Heart left ventricle (tissue), 16 donors: ENCODE measurements at regions of chr5 and their contacts with region 1.

Region 1: DNA sequence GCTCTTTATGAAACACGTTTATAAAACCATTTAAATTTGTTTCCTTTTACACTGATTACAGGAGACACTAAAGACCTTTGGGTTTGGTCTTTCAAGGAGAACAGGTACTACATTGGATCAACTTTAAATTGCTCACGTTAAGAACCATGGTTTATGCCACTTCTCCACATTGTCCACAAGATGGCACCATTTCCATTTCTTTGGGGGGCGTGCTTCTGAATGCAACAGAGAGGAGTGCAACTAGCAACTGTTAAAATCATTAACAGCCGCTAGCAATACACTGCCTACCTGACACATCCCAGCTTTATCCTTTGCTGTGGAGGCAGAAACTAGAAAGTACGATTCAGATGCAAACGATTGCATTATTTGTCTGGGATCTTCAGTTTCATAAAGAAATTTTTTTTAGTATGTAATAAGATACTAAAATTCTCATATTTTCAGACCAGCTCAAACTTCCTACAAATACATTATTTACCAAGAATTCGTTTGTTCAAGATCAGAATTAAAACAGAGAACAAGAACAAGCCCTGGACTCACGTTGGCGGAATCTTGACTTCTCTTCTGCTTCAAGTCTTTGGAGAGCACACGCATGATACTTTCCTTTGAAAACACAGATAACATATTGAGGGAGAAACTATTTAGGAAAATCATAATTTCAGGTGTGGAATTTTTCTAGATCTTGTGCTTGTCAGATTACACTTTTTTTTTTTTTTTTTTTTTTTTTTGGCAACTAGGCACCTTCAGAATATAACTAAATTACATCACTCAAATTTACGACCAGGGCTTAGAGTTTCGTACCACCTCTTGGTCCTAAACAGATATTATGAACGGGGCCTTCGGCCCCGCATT is 702 bp downstream of the CDC20B start:
- DNase-seq: peak in 3 of 5 donors; percentile 30 to 54 (median 33)
- ATAC-seq: peak; percentile 77 to 86 (median 81)
- H3K4me3 ChIP-seq: peak overlapping the region; percentile 29 to 63 (median 50)
- H3K27ac ChIP-seq: no peak overlapping the region
- H3K4me1 ChIP-seq: peaks cover 5 to 32% (median 24%) of the 10 kb centered on the region in 12 donors
- H3K27me3 ChIP-seq: peaks cover 26 to 65% (median 43%) of the 10 kb centered on the region in 9 donors
- CTCF ChIP-seq: peak; percentile 74 to 89 (median 81)
- POLR2A ChIP-seq: no peak

Region 2: DNA sequence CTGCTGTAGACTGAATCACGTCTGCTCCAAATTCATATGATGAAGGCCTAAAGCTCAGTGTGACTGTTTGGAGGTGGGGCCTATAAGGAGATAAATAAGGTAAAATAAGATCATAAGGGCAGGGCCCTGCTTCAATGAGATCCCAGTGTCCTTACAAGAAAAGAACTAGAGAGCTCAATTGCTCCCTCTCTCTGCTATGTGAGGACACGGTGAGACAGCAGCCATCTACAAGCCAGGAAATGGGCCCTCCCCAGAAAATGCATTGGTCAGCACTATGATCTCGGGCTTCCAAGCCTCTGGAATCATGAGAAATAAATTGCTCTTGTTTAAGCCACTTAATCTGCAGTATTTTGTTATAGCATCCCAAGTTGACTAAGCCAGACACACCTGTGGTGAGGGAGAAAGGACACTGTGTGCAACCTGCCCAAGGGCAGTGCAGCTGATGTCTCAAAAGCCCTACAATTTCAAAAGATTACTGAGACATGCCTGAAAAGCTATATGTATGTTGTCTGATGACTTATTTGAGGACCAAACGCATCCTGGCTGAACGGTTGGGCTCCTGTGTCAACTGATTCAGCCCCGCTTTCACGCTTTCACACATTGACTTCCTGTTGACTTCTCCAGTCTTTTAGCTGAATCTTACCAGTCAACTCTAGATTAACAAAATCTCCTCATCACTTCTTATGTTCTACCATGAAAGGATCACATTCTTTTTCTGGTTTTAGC is 135.1 kb before region 1 on chr5:
- intact Hi-C with region 1: no loop called
- DNase-seq: no peak
- ATAC-seq: no peak
- H3K4me3 ChIP-seq: no peak overlapping the region
- H3K27ac ChIP-seq: peak overlapping the region in 1 of 12 donors; percentile 77
- H3K4me1 ChIP-seq: peaks cover 0 to 8% (median 0%) of the 10 kb centered on the region in 12 donors
- H3K27me3 ChIP-seq: no peaks in the 10 kb centered on the region
- CTCF ChIP-seq: peak in 1 of 12 donors; percentile 17
- POLR2A ChIP-seq: no peak

Region 3: DNA sequence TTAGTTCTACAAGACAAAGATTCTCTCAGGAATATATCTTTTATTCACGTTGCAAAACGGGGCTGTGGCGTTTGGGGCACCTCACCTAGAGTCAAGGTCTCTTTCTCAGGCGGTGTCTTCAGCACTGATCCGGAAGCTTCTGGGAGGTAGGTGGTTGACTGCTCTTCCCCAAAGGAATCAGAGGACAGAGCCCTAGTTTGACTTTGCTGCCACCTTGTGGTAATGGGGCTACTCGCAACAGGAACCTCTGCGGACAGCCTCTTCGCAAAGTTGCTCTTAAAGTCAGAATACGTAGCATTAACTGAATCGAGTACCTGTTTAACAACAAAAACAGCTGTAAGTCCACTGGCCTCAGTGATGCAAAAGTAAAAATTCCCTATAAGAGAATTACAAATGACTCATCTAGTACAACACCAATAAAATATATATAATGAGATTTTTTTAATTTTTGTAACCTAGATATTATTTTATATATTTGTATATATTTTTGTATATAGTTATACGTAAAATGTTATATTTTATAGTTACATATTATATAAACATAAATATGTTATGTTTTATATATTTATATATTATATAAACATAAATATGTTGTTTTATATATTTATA is 25.6 kb before region 1 on chr5:
- intact Hi-C with region 1: no loop called
- DNase-seq: peak; percentile 64 to 77 (median 69)
- ATAC-seq: peak; percentile 37 to 89 (median 74)
- H3K4me3 ChIP-seq: no peak overlapping the region
- H3K27ac ChIP-seq: no peak overlapping the region
- H3K4me1 ChIP-seq: peaks cover 0 to 5% (median 0%) of the 10 kb centered on the region in 12 donors
- H3K27me3 ChIP-seq: peaks cover 0 to 19% (median 3%) of the 10 kb centered on the region in 9 donors
- CTCF ChIP-seq: peak; percentile 84 to 97 (median 92)
- POLR2A ChIP-seq: no peak

Region 4: DNA sequence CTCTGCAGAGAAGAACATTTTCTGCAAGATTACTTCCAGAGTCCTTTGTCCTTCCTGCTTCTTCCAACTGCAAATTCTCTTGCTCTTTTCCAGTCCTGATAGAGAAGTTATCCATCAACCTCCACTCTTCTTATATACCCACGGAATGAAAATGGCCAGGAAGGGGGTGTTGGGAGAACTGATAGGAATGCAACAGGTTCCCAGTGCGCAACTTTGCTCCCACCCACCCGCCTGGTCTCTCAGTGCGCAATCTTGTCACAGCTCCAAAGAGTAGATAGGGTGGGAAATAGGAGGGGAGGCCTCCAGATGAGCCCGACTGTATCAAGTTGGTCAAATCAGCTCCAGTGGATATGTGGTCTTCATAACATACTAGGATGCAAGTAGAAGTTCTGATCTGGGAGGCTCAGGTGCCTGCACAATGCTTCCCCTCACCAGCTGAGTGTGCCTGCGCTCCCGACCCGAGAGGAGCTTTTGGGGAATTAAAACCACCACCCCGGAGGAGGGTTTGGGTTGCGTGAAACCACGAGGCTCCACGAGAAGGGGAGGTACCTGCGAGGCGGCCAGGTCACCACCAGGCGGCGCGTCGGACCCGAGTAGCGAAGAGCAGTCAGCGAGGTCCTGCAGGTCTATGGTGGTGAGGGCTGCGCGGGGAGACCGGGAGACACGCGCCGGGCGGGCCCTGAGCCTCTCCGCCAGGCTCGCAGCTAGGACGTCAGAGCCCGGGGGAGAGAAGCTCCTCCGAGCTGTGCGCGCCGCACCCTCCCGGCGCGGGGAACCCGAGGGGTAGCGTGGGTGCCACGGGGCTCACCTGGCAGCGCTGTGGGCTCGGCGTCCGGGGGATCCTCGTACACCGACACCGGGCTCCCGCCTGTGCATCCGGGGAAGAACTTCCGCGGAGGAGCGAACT is 54.0 kb after region 1 on chr5:
- intact Hi-C with region 1: loop called in 9 of 10 experiments (anchors 5 to 10 kb)
- DNase-seq: peak in 2 of 5 donors; percentile 26 to 73
- ATAC-seq: peak in 2 of 4 donors; percentile 45 to 59
- H3K4me3 ChIP-seq: peak overlapping the region in 11 of 12 donors; percentile 18 to 52 (median 38)
- H3K27ac ChIP-seq: no peak overlapping the region
- H3K4me1 ChIP-seq: peaks cover 0 to 33% (median 17%) of the 10 kb centered on the region in 12 donors
- H3K27me3 ChIP-seq: peaks cover 71 to 100% (median 100%) of the 10 kb centered on the region in 9 donors
- CTCF ChIP-seq: peak in 8 of 12 donors; percentile 6 to 36 (median 21)
- POLR2A ChIP-seq: no peak

Region 5: GRCh38 chr5:55232985-55233928 is 61.0 kb after region 1 on chr5 and contains the start of gene CCNO:
- intact Hi-C with region 1: loop called in 9 of 10 experiments (anchors 5 to 10 kb)
- DNase-seq: peak; percentile 44 to 78 (median 54)
- ATAC-seq: peak; percentile 62 to 92 (median 86)
- H3K4me3 ChIP-seq: peak within 1 kb of the TSS; percentile 39 to 67 (median 56)
- H3K27ac ChIP-seq: no peak within 1 kb of the TSS
- H3K4me1 ChIP-seq: peaks cover 6 to 42% (median 32%) of the 10 kb centered on the region in 12 donors
- H3K27me3 ChIP-seq: peaks cover 43 to 100% (median 79%) of the 10 kb centered on the region in 9 donors
- CTCF ChIP-seq: no peak
- POLR2A ChIP-seq: no peak
- total RNA-seq, gene CCNO: 0.23 to 0.36 TPM in 2 of 9 donors, not detected in the others

Region 6: DNA sequence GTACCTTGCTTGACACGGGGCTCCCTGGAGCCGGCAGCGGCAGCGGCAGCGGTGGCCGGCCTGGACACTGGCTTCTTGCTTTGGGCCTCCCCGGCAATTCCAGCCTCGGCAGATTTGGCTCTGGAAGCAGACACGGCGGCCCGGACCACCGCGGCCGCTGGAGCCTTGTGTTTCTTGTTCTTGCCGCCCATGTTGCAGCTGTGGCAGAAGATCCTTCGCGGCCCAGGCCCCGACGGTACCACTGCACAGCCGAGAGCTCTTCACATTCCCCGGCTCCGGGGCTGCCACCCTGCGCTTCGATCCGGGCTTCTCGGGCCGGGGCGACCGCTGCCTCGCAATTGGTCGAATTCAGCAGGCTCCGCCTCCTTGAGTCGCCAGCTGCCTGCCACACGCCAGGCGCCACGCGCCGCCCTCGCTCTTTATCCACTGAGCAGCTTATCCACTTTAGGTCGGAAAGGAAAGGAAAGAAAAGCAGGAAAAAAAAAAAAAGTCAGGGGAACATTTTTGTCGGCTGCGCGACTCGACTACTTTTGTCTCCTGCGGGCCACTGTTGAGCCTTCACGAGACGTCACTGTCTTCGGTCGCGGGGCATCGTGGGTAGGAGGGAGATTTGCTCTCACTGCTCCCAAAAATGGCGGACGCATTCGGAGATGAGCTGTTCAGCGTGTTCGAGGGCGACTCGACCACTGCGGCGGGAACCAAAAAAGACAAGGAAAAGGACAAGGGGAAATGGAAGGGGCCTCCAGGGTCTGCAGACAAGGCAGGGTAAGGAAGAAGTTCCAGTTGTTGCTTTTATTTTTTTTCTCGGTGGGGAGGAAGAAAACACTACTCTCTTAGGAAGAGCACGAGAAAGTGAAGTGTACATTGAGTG is 135.3 kb after region 1 on chr5 and contains the starts of genes DHX29 and MTREX:
- intact Hi-C with region 1: loop called in 1 of 10 experiments (anchors 5 kb)
- DNase-seq: peak; percentile 92 to 94 (median 94)
- ATAC-seq: peak; percentile 96 to 97 (median 97)
- H3K4me3 ChIP-seq: peak within 1 kb of the TSS; percentile 55 to 91 (median 76)
- H3K27ac ChIP-seq: peak within 1 kb of the TSS; percentile 79 to 98 (median 89)
- H3K4me1 ChIP-seq: peaks cover 4 to 72% (median 59%) of the 10 kb centered on the region in 12 donors
- H3K27me3 ChIP-seq: no peaks in the 10 kb centered on the region
- CTCF ChIP-seq: no peak
- POLR2A ChIP-seq: peak in 1 of 2 donors; percentile 67
- total RNA-seq, gene DHX29: 18.4 to 26.8 (median 22.3) TPM
- total RNA-seq, gene MTREX: 49.6 to 68.8 (median 58.0) TPM